Activated naive CD4-positive, alpha-beta T cell treated with anti-CD3 and anti-CD28 coated beads for 36 hours (primary cell): ENCODE measurements at regions of chr1 and their contacts with region 1.

Region 1: GRCh38 chr1:45011837-45012638 is at the start of gene UROD:
- DNase-seq: peak; percentile 96
- H3K4me3 Mint-ChIP-seq: peak within 1 kb of the TSS; percentile 81
- H3K27ac Mint-ChIP-seq: peak within 1 kb of the TSS; percentile 89
- H3K4me1 Mint-ChIP-seq: peaks cover 36% of the 10 kb centered on the region
- H3K27me3 Mint-ChIP-seq: no peaks in the 10 kb centered on the region
- total RNA-seq, gene UROD: 117 to 126 TPM

Region 2: DNA sequence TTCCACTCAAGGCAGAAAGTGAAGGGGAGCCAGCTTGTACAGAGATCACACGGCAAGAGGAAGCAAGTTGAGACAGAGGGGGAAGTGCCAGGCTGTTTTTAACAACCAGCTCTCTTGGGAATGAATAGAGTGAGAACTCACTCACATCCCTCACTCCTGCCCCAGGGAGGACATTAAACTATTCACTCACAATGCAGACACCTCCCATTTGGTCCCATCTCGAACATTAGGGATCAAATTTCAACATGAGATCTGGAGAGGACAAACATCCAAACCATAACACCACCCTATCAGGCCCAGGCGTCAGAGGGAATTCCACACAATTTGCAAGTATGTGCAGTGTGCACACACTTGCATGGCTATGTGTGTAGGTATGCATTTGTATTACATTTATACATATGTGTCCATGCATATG is 736.0 kb before region 1 on chr1:
- CTCF ChIA-PET with region 1: no interaction called
- intact Hi-C with region 1: no loop called
- DNase-seq: no peak
- H3K4me3 Mint-ChIP-seq: no peak overlapping the region
- H3K27ac Mint-ChIP-seq: no peak overlapping the region
- H3K4me1 Mint-ChIP-seq: peaks cover 22% of the 10 kb centered on the region
- H3K27me3 Mint-ChIP-seq: no peaks in the 10 kb centered on the region

Region 3: GRCh38 chr1:44786138-44786840 is 225.7 kb before region 1 on chr1:
- CTCF ChIA-PET with region 1: interaction called, 6 read pairs
- intact Hi-C with region 1: loop called (anchors 1 kb)
- DNase-seq: peak; percentile 79
- H3K4me3 Mint-ChIP-seq: peak overlapping the region; percentile 72
- H3K27ac Mint-ChIP-seq: peak overlapping the region; percentile 71
- H3K4me1 Mint-ChIP-seq: peaks cover 25% of the 10 kb centered on the region
- H3K27me3 Mint-ChIP-seq: no peaks in the 10 kb centered on the region

Region 4: GRCh38 chr1:44985747-44986359 is 26.2 kb before region 1 on chr1:
- CTCF ChIA-PET with region 1: interaction called, 7 read pairs
- intact Hi-C with region 1: loop called (anchors 1 kb)
- DNase-seq: no peak
- H3K4me3 Mint-ChIP-seq: peak overlapping the region; percentile 100
- H3K27ac Mint-ChIP-seq: peak overlapping the region; percentile 80
- H3K4me1 Mint-ChIP-seq: peaks cover 23% of the 10 kb centered on the region
- H3K27me3 Mint-ChIP-seq: no peaks in the 10 kb centered on the region

Region 5: DNA sequence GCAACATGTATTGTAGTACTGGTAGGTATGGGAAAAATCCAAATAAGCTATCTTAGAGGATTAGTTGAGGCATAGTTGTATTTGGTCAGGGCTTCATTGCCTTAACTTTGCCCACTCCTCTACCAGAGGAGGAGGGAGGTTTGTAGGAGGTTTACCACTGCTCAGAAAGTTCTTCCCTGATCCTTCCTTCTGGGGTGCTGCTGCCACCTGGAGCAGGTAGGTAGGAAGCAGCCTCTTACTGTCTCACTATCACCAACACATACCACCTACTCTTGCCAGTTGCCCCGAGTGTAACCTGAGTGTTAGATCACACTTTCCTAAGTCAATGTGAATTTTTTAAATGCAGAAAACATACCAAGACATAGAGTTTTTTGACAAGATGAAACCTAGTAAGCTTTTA is 218.5 kb after region 1 on chr1:
- CTCF ChIA-PET with region 1: interaction called, 6 read pairs
- intact Hi-C with region 1: loop called (anchors 1 kb)
- DNase-seq: peak; percentile 47
- H3K4me3 Mint-ChIP-seq: no peak overlapping the region
- H3K27ac Mint-ChIP-seq: no peak overlapping the region
- H3K4me1 Mint-ChIP-seq: no peaks in the 10 kb centered on the region
- H3K27me3 Mint-ChIP-seq: no peaks in the 10 kb centered on the region